A673 (cell line): ENCODE measurements at regions of chr14 and their contacts with region 1.

Region 1: GRCh38 chr14:35292051-35292769 is at the start of gene PSMA6:
- DNase-seq: peak; percentile 100
- H3K4me3 ChIP-seq: peak within 1 kb of the TSS; percentile 83
- H3K27ac ChIP-seq: peak within 1 kb of the TSS; percentile 90
- H3K4me1 ChIP-seq: peaks cover 17% of the 10 kb centered on the region
- H3K27me3 ChIP-seq: no peaks in the 10 kb centered on the region
- CTCF ChIP-seq: no peak
- total RNA-seq, gene PSMA6: 364 and 392 TPM in 2 replicates

Region 2: DNA sequence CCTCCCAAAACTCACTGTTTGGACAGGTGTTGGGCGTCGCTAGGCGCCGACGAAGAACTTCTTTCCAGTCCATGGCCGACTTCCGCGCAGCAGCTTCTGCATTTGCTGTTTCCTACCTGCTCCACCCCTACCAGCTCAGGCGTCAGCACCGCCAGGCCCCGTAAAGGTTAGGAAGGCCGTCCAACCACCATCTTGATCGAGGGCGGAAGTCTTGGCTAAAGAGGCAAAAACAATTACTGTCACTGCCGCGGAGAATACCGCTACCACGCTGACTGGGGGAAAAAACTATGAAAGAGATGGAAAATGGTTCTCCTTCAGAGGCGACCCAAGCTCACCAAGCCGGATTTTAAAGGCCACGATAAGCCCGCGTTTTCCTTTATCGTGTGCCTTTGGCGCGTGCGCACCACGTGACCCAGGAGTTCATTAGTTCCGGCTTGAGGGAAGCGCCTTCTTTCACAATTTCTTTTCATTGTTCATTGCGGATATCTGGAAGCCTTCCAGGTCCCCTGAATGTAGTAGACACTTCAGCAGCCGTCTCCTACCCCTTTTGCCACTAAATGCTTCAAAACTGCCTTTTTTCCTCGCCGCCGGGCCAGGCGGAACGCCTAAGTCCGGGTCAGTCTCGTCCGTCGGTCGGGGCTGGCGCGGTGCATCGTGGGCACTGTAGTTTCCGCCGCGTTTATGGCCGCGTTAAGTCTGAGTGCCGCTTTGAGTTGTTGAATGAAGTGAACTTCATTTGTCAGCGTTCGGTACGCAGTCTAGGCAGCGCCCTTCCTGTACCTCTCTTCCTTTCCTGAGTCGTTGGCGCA is 170.1 kb before region 1 on chr14 and contains the starts of genes PPP2R3C and PRORP:
- CTCF ChIA-PET with region 1: no interaction called
- POLR2A ChIA-PET with region 1: no interaction called
- intact Hi-C with region 1: loop called (anchors 10 kb)
- DNase-seq: peak; percentile 95
- H3K4me3 ChIP-seq: peak within 1 kb of the TSS; percentile 64
- H3K27ac ChIP-seq: peak within 1 kb of the TSS; percentile 98
- H3K4me1 ChIP-seq: peaks cover 11% of the 10 kb centered on the region
- H3K27me3 ChIP-seq: no peaks in the 10 kb centered on the region
- CTCF ChIP-seq: no peak
- total RNA-seq, gene PPP2R3C: 50.5 and 56.2 TPM in 2 replicates
- total RNA-seq, gene PRORP: 41.5 and 46.5 TPM in 2 replicates

Region 3: GRCh38 chr14:35229495-35230089 is 62.6 kb before region 1 on chr14:
- CTCF ChIA-PET with region 1: no interaction called
- POLR2A ChIA-PET with region 1: no interaction called
- intact Hi-C with region 1: loop called (anchors 5 kb)
- DNase-seq: peak; percentile 61
- H3K4me3 ChIP-seq: no peak overlapping the region
- H3K27ac ChIP-seq: no peak overlapping the region
- H3K4me1 ChIP-seq: peaks cover 53% of the 10 kb centered on the region
- H3K27me3 ChIP-seq: no peaks in the 10 kb centered on the region
- CTCF ChIP-seq: peak; percentile 68